Pancreas (tissue), 10 donors: ENCODE measurements at regions of chr6 and their contacts with region 1.

Region 1: DNA sequence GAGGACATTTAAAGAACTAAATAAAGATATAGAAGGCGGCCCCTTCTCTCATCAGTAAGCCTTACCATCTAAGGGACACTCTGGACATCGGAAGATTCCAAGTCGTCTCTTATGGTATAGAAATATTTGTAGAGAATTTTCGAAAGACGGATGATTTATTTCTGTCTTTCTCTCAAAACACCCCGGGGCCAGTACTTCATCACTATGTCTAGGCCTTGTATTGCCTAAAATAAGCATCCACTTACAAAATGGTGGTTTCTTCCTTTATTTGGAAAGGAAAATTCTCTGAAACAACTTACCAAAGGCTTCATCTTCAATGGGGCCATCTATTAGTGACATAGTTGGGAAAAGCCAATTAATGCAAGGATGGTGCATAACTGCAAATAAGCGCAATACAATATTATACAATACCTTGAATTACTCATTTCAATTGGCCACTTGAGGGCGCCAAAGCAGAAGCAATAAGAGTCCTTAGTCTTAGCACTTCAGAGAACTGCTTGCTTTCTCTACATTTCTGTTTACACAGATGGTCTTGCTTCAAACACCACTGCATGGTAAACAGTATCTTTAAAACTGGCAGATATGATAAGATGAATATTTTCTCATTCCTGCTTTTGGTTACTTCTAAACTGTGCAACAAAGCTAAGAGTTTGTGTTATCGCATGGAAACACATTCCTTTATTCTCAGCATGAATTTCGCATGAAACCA is 113.2 kb downstream of the VIP start:
- DNase-seq: peak in 4 of 6 donors; percentile 18 to 53 (median 39)
- ATAC-seq: peak; percentile 66 to 83 (median 82)
- H3K4me3 ChIP-seq: no peak overlapping the region
- H3K27ac ChIP-seq: no peak overlapping the region
- H3K4me1 ChIP-seq: no peaks in the 10 kb centered on the region
- H3K27me3 ChIP-seq: peaks cover 0 to 8% (median 0%) of the 10 kb centered on the region in 4 donors
- CTCF ChIP-seq: peak; percentile 22 to 59 (median 46)

Region 2: DNA sequence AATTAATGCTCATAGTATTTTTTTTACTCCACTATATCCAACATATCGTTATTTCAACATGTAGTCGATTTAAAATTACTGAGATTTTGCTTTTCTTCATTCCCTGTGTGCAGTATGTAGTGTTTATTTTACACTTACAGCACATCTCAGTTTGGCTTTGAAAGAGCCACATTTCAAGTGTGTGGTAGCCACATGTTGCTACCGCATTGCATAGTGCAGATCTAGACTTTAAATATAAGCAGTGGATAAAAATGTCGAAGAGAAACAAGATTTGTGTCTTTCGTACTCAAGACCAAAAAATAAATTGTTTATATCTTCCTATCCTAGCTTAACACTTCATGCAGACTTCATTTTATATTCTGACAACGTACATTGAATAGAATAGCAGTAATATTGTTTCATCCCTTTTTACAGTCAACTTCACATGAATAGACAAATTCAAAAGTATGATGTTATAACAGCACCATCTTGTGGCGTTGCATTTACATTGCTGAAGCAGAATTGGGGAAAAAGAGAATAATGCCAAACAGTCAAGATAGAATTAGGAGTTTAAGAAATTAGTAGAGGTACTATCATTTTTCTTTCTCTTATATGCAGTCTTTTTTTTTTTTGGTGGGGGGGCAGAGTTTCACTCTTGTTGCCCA is 89.2 kb after region 1 on chr6:
- intact Hi-C with region 1: loop called in 1 of 3 experiments (anchors 10 kb)
- DNase-seq: no peak
- ATAC-seq: peak in 1 of 4 donors; percentile 30
- H3K4me3 ChIP-seq: no peak overlapping the region
- H3K27ac ChIP-seq: no peak overlapping the region
- H3K4me1 ChIP-seq: no peaks in the 10 kb centered on the region
- H3K27me3 ChIP-seq: no peaks in the 10 kb centered on the region
- CTCF ChIP-seq: peak in 2 of 4 donors; percentile 11 to 34

Region 3: GRCh38 chr6:153023977-153024708 is 160.4 kb after region 1 on chr6:
- intact Hi-C with region 1: loop called in 1 of 3 experiments (anchors 10 kb)
- DNase-seq: peak in 3 of 6 donors; percentile 10 to 50 (median 19)
- ATAC-seq: peak; percentile 89 to 96 (median 95)
- H3K4me3 ChIP-seq: no peak overlapping the region
- H3K27ac ChIP-seq: no peak overlapping the region
- H3K4me1 ChIP-seq: no peaks in the 10 kb centered on the region
- H3K27me3 ChIP-seq: no peaks in the 10 kb centered on the region
- CTCF ChIP-seq: peak; percentile 63 to 80 (median 76)